Posterior vena cava (tissue), 2 donors: ENCODE measurements at regions of chr1 and their contacts with region 1.

Region 1: GRCh38 chr1:43952731-43953346 is 6.1 kb downstream of the IPO13 start:
- DNase-seq: peak; percentile 64

Region 2: DNA sequence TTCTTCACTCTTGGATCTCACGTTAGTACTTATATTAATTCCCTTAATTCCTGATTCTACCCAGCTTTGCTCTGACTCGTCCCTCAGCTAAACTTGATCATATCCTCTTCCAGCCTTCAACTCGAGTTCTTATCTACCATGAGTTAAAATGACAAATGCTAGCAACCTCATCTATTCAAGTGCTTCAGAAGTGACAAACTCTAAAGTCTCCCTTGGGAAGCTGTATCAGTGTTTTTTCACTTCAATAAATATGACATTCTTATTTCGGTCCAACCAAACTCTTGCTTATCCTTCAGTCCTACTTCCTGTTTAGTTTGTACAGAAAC is 1693.1 kb before region 1 on chr1:
- intact Hi-C with region 1: loop called in 1 of 2 experiments (anchors 5 kb)
- DNase-seq: no peak

Region 3: GRCh38 chr1:43979528-43980254 is 26.9 kb after region 1 on chr1:
- intact Hi-C with region 1: no loop called
- DNase-seq: no peak